Caco-2 (cell line): ENCODE measurements at regions of chr10 and their contacts with region 1.

Region 1: GRCh38 chr10:52499281-52499680 is 185.2 kb downstream of the DKK1 start:
- DNase-seq: peak in 1 of 2 experiments; percentile 47
- H3K4me3 ChIP-seq: no peak overlapping the region
- H3K4me3 Mint-ChIP-seq: no peak overlapping the region
- H3K27ac Mint-ChIP-seq: no peak overlapping the region
- H3K4me1 ChIP-seq: no peaks in the 10 kb centered on the region
- H3K4me1 Mint-ChIP-seq: no peaks in the 10 kb centered on the region
- H3K27me3 ChIP-seq: no peaks in the 10 kb centered on the region
- H3K27me3 Mint-ChIP-seq: no peaks in the 10 kb centered on the region
- CTCF ChIP-seq: no peak

Region 2: DNA sequence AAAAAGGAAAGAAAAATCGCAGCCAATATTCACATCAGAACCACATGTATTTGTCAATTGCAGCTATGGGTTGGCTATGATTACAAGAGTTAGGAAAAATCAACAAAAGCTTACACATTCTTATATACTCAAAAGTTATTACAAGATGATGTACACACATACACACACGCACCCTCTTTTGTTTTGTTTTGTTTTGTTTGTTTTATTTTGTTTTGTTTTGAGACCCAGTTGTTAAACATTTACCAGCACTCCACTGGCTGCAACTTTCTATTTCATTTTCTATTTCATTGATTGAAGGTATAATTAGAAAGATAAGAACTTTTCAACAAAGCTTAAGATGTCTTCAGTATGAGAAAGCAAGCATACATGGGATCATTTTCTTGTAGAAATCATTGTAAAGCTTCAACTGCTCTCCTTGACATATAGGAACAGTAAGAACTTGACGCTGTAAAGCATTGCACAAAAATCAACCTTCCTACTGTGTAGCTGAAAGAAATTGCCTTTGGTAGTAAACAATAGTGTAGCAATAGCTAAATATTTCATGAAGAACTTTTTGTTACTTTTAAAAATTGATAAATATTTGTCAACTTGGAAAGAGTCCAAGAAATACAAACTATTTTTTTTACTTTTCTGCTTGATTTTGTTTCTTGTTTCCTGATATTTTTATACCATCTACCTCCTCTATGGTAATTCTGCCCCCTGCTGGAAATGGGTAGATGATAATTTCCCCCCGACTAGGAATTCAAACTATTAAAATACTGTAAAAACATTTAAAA is 67.4 kb after region 1 on chr10:
- CTCF ChIA-PET with region 1: no interaction called
- POLR2A ChIA-PET with region 1: interaction called, 11 read pairs
- intact Hi-C with region 1: no loop called
- DNase-seq: peak in 1 of 2 experiments; percentile 65
- H3K4me3 ChIP-seq: no peak overlapping the region
- H3K4me3 Mint-ChIP-seq: no peak overlapping the region
- H3K27ac Mint-ChIP-seq: no peak overlapping the region
- H3K4me1 ChIP-seq: peaks cover 5% of the 10 kb centered on the region
- H3K4me1 Mint-ChIP-seq: no peaks in the 10 kb centered on the region
- H3K27me3 ChIP-seq: no peaks in the 10 kb centered on the region; the same call in 1 of the 2 replicates
- H3K27me3 Mint-ChIP-seq: no peaks in the 10 kb centered on the region
- CTCF ChIP-seq: peak; percentile 78 to 83

Region 3: DNA sequence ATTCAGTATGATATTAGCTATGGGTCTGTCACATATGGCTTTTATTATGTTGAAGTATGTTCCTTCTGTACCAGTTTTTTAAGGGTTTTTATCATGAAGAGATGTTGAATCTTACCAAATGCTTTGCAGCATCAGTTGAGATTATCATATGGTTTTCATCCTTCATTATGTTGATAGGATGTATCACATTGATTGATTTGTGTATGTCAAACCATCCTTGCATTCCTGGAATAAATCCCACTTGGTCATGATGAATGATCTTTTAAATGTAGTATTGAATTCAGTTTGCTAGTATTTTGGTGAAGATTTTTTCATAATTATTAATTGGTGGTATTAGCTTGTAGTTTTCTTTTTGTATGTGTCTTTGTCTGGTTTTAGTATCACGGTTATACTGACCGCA is 87.4 kb after region 1 on chr10:
- CTCF ChIA-PET with region 1: no interaction called
- POLR2A ChIA-PET with region 1: no interaction called
- intact Hi-C with region 1: no loop called
- DNase-seq: no peak
- H3K4me3 ChIP-seq: no peak overlapping the region
- H3K4me3 Mint-ChIP-seq: no peak overlapping the region
- H3K27ac Mint-ChIP-seq: no peak overlapping the region
- H3K4me1 ChIP-seq: no peaks in the 10 kb centered on the region
- H3K4me1 Mint-ChIP-seq: no peaks in the 10 kb centered on the region
- H3K27me3 ChIP-seq: no peaks in the 10 kb centered on the region
- H3K27me3 Mint-ChIP-seq: no peaks in the 10 kb centered on the region
- CTCF ChIP-seq: no peak